Dorsolateral prefrontal cortex (tissue), 120 donors: ENCODE measurements at regions of chr20 and their contacts with region 1.

Region 1: DNA sequence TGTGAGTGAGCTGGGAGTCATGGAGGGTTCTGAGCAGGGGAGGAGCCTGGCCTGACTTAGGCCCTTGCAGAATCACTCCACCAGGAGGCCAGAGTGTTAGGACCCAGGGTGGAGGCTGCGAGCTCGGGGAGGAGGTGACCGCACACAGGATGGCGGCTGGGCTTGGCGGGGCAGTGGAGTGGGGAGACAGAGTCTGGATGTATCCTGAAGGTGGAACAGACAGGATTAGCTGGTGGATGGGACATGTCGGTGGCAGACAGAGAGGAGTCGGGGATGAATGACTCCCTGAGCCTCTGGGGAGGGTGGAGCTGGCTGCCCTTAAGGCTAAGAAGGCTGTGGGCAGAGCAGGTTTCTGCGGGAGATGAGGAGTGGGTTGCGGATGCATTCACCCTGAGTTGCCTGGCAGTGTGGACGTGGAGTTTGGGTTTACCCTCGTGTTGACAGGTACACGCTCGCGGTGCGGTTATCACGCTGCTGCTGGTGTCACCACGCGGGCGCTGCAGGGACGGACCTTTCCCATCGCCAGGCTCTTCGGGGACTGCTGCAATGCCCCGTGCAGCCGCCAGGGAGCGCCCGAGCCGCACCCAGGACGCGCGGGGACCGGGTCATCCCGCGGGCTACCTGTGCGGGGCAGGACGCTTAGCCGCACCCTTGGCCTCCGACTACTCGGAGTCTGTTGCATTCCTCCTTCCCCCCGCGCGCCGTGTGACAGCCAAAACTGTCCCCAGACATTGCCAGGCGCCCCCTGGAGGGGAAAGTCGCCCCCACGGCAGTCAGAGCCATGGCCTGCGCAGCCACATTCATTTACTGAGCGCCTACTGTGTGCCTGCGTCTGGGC is 43.0 kb upstream of the PTGIS start:
- DNase-seq: peak; percentile 63 to 88 (median 77)
- H3K4me3 ChIP-seq: peak overlapping the region in 57 of 59 donors; percentile 3 to 62 (median 39)
- H3K27ac ChIP-seq: peak overlapping the region in 21 of 59 donors; percentile 1 to 83 (median 66)
- H3K27me3 ChIP-seq: peaks cover 0 to 3% (median 0%) of the 10 kb centered on the region in 45 donors
- CTCF ChIP-seq: peak; percentile 88 to 100 (median 99)

Region 2: DNA sequence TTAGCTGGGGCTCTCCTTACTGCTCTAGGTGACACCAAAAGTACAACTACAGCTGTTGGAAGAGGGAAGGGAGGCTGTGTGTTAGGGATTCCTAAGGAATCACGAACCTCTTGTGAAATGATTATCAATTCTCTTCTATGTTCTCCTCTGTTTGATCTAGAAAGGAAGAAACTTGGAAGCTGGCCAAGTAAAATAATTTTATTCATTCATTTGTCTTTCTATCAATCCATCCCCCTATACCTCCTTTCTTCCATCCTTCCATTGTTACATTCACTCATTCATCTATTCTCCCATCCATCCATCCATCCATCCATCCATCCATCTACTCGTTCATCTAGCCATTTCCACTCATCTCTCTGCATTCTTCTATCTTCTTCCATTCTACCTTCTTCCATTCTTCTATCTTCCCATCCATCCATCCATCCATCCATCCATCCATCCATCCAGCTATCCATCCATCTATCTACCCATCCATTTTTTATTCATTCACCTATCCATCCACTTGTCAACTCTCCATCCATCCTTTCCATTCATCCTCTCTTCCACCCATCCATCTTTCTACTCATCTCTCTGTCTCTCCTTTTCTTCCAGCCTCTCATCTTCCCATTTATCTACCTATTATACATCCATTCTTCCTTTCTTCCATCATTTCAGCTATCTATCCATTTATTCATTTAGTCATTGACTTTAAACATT is 280.2 kb before region 1 on chr20:
- intact Hi-C with region 1: loop called (anchors 5 to 10 kb)
- DNase-seq: no peak
- H3K4me3 ChIP-seq: no peak overlapping the region
- H3K27ac ChIP-seq: no peak overlapping the region
- H3K27me3 ChIP-seq: no peaks in the 10 kb centered on the region
- CTCF ChIP-seq: no peak

Region 3: DNA sequence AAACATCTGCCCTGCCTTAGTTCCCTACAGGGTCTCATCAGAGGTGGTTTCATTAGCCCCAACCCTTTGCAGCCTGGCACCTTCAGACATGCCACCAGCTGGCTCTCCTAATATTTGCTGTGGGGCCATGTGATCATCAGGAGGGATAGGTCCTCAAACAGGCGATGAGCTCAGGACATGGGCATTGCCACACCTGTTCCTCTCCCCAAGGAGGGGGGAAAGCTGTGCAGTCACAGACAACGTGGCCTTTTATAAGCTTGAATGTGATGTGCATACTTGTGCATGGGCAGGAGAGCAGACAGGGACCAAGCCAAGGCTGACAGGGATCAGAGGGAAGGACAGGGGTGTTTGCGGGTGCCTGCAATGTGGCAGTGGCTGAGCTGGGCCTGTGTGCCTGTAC is 254.2 kb before region 1 on chr20:
- intact Hi-C with region 1: no loop called
- DNase-seq: no peak
- H3K4me3 ChIP-seq: no peak overlapping the region
- H3K27ac ChIP-seq: no peak overlapping the region
- H3K27me3 ChIP-seq: no peaks in the 10 kb centered on the region
- CTCF ChIP-seq: no peak

Region 4: GRCh38 chr20:49397525-49397924 is 213.4 kb before region 1 on chr20:
- intact Hi-C with region 1: no loop called
- DNase-seq: no peak
- H3K4me3 ChIP-seq: no peak overlapping the region
- H3K27ac ChIP-seq: peak overlapping the region in 12 of 59 donors; percentile 4 to 45 (median 22)
- H3K27me3 ChIP-seq: no peaks in the 10 kb centered on the region
- CTCF ChIP-seq: no peak

Region 5: GRCh38 chr20:49541733-49542513 is 69.0 kb before region 1 on chr20:
- intact Hi-C with region 1: loop called (anchors 2 to 5 kb)
- DNase-seq: peak in 7 of 10 donors; percentile 8 to 65 (median 54)
- H3K4me3 ChIP-seq: no peak overlapping the region
- H3K27ac ChIP-seq: no peak overlapping the region
- H3K27me3 ChIP-seq: no peaks in the 10 kb centered on the region
- CTCF ChIP-seq: peak; percentile 45 to 82 (median 65)

Region 6: GRCh38 chr20:49713753-49714712 is 103.1 kb after region 1 on chr20 and contains the start of gene B4GALT5:
- intact Hi-C with region 1: loop called (anchors 2 to 5 kb)
- DNase-seq: peak; percentile 55 to 90 (median 81)
- H3K4me3 ChIP-seq: peak within 1 kb of the TSS; percentile 61 to 98 (median 91)
- H3K27ac ChIP-seq: peak within 1 kb of the TSS; percentile 58 to 96 (median 92)
- H3K27me3 ChIP-seq: no peaks in the 10 kb centered on the region
- CTCF ChIP-seq: no peak
- total RNA-seq, gene B4GALT5: 24.2 to 52.0 (median 37.1) TPM

Region 7: DNA sequence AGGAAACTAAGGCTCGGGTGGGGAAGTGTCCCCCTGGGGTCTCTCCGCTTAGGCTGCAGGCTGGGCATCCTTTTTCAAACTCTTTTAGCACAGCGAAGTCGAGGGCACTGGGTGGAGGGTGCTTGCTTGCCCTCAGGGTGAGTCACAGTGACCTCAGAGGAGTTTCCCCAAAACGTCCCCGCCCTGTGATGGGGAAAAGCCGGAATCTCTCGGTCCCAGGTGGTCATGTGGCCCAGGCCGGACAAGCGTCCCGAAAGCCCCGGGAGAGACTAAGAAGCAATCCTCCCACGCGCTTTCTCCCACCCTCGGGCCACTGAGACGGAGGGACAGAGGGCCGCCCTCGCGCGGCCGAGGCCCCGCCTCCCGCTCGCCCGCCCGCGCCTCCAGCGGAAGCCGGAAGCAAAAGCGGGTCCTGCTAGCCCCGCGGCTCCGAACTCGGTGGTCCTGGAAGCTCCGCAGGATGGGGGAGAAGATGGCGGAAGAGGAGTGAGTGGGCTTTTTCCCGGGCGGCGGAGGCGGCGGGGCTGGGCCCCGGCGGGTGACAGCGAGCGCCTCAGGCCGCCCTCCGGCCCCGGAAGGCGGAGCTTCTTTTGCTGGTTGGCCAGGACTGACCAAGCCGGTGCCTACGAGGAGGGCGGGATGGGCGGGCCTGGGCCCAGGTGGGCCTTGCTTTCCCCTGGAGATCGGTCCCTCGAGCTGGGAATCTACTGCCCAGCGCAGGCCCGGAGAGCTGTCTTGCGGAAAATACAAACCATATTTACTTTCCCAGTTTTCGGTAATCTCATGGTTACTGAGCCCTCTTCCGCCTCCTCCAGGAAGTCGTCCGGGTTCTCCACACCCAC is 201.8 kb after region 1 on chr20 and contains the start of gene SLC9A8:
- intact Hi-C with region 1: loop called in 1 of 2 experiments (anchors 1 kb)
- DNase-seq: peak; percentile 77 to 94 (median 92)
- H3K4me3 ChIP-seq: peak within 1 kb of the TSS; percentile 50 to 99 (median 89)
- H3K27ac ChIP-seq: peak within 1 kb of the TSS; percentile 52 to 97 (median 91)
- H3K27me3 ChIP-seq: no peaks in the 10 kb centered on the region
- CTCF ChIP-seq: peak in 54 of 56 donors; percentile 10 to 75 (median 54)
- total RNA-seq, gene SLC9A8: 8.7 to 21.9 (median 14.9) TPM

Region 8: GRCh38 chr20:49853640-49854039 is 242.7 kb after region 1 on chr20:
- intact Hi-C with region 1: loop called in 1 of 2 experiments (anchors 2 kb)
- DNase-seq: peak in 1 of 10 donors; percentile 64
- H3K4me3 ChIP-seq: no peak overlapping the region
- H3K27ac ChIP-seq: peak overlapping the region in 27 of 59 donors; percentile 3 to 92 (median 61)
- H3K27me3 ChIP-seq: no peaks in the 10 kb centered on the region
- CTCF ChIP-seq: no peak